ENCODE measurements at regions of chr10 and their contacts with region 1.

Region 1: GRCh38 chr10:76086761-76087639 is 655.6 kb downstream of the LRMDA start:
- DNase-seq: peak in 1 of 2 experiments; percentile 61
- H3K4me3 ChIP-seq: no peak overlapping the region
- H3K27ac ChIP-seq: no peak overlapping the region
- H3K4me1 ChIP-seq: peaks cover 2 to 18% (median 8%) of the 10 kb centered on the region in 4 experiments; a peak in 5 of 7 replicates
- H3K27me3 ChIP-seq: peaks cover 0 to 5% (median 3%) of the 10 kb centered on the region in 4 experiments; a peak in 2 of 7 replicates
- CTCF ChIP-seq: peak; percentile 79 to 89 (median 85)
- EP300 ChIP-seq: no peak
- POLR2A ChIP-seq: no peak
- RAD21 ChIP-seq: peak; percentile 90 to 94

Region 2: GRCh38 chr10:75982611-75983369 is 104.2 kb before region 1 on chr10:
- CTCF ChIA-PET with region 1: no interaction called
- POLR2A ChIA-PET with region 1: no interaction called
- DNase-seq: no peak
- H3K4me3 ChIP-seq: no peak overlapping the region
- H3K27ac ChIP-seq: no peak overlapping the region
- H3K4me1 ChIP-seq: peaks cover 0 to 3% (median 0%) of the 10 kb centered on the region in 4 experiments; a peak in 1 of 7 replicates
- H3K27me3 ChIP-seq: no peaks in the 10 kb centered on the region
- CTCF ChIP-seq: no peak
- EP300 ChIP-seq: no peak
- POLR2A ChIP-seq: no peak
- RAD21 ChIP-seq: no peak

Region 3: DNA sequence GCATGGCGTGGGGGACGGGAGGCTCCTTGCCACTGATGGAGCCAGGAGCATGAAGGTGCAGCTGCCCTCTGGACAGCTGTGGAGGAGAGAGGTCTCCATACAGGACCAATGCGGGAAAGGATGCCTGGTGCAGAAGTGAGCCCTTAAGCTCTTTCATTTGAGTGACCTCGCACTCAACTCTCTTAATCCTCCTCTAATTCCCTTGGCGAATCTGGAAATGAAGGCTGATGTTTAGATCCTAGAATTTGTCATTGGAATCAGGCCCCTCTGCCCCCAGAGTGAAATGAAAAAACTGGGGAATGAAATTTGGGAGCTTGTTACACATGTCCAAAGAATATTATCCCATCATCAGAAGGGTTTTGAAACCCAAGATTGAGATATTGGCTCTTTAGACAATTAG is 16.1 kb before region 1 on chr10:
- CTCF ChIA-PET with region 1: interaction called, 12 read pairs
- POLR2A ChIA-PET with region 1: no interaction called
- DNase-seq: no peak
- H3K4me3 ChIP-seq: no peak overlapping the region
- H3K27ac ChIP-seq: no peak overlapping the region
- H3K4me1 ChIP-seq: no peaks in the 10 kb centered on the region
- H3K27me3 ChIP-seq: no peaks in the 10 kb centered on the region
- CTCF ChIP-seq: no peak
- EP300 ChIP-seq: no peak
- POLR2A ChIP-seq: no peak
- RAD21 ChIP-seq: no peak

Region 4: GRCh38 chr10:76303682-76304316 is 216.8 kb after region 1 on chr10:
- CTCF ChIA-PET with region 1: interaction called, 20 read pairs
- POLR2A ChIA-PET with region 1: no interaction called
- DNase-seq: peak; percentile 41 to 62
- H3K4me3 ChIP-seq: no peak overlapping the region
- H3K27ac ChIP-seq: no peak overlapping the region
- H3K4me1 ChIP-seq: peaks cover 0 to 3% (median 0%) of the 10 kb centered on the region in 4 experiments; a peak in 1 of 7 replicates
- H3K27me3 ChIP-seq: peaks cover 0 to 6% (median 0%) of the 10 kb centered on the region in 4 experiments; a peak in 2 of 7 replicates
- CTCF ChIP-seq: peak; percentile 53 to 87 (median 80)
- EP300 ChIP-seq: no peak
- POLR2A ChIP-seq: no peak
- RAD21 ChIP-seq: peak; percentile 92 to 98

Measured in H1 (cell line).